ENCODE measurements at regions of chr17 and their contacts with region 1.

Region 1: DNA sequence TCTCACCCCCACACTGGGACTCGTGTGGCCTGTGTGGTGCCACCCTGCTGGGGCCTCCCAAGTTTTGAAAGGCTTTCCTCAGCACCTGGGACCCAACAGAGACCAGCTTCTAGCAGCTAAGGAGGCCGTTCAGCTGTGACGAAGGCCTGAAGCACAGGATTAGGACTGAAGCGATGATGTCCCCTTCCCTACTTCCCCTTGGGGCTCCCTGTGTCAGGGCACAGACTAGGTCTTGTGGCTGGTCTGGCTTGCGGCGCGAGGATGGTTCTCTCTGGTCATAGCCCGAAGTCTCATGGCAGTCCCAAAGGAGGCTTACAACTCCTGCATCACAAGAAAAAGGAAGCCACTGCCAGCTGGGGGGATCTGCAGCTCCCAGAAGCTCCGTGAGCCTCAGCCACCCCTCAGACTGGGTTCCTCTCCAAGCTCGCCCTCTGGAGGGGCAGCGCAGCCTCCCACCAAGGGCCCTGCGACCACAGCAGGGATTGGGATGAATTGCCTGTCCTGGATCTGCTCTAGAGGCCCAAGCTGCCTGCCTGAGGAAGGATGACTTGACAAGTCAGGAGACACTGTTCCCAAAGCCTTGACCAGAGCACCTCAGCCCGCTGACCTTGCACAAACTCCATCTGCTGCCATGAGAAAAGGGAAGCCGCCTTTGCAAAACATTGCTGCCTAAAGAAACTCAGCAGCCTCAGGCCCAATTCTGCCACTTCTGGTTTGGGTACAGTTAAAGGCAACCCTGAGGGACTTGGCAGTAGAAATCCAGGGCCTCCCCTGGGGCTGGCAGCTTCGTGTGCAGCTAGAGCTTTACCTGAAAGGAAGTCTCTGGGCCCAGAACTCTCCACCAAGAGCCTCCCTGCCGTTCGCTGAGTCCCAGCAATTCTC is 27.4 kb downstream of the STH start:
- DNase-seq: no peak
- H3K4me3 ChIP-seq: no peak overlapping the region
- H3K27ac ChIP-seq: no peak overlapping the region
- H3K4me1 ChIP-seq: no peaks in the 10 kb centered on the region
- H3K27me3 ChIP-seq: no peaks in the 10 kb centered on the region
- CTCF ChIP-seq: no peak
- EP300 ChIP-seq: no peak
- POLR2A ChIP-seq: no peak

Region 2: GRCh38 chr17:45852535-45853297 is 173.7 kb before region 1 on chr17:
- intact Hi-C with region 1: no loop called
- DNase-seq: peak; percentile 37 to 71 (median 56)
- H3K4me3 ChIP-seq: no peak overlapping the region
- H3K27ac ChIP-seq: no peak overlapping the region
- H3K4me1 ChIP-seq: no peaks in the 10 kb centered on the region
- H3K27me3 ChIP-seq: no peaks in the 10 kb centered on the region
- CTCF ChIP-seq: peak; percentile 44 to 68 (median 61)
- EP300 ChIP-seq: no peak
- POLR2A ChIP-seq: no peak

Region 3: DNA sequence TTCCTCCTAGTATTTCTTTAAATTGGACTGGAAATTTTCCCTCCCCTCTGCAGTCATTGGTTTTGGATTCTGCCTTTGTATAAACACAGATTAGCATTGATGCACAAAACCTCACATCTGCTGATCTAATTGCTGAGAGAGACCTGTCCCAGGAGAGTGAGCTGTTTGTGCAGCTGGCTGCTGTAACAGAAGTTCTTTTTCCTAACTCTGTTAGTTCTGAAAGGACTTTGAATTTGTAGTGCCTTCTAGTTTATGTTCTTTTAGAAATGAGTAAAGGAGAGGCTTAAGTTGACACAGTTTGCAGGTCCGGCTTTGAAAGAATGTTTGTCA is 1578.2 kb after region 1 on chr17:
- intact Hi-C with region 1: loop called in 1 of 4 experiments (anchors 5 kb)
- DNase-seq: no peak
- H3K4me3 ChIP-seq: no peak overlapping the region
- H3K27ac ChIP-seq: no peak overlapping the region
- H3K4me1 ChIP-seq: peaks cover 2% of the 10 kb centered on the region
- H3K27me3 ChIP-seq: no peaks in the 10 kb centered on the region
- CTCF ChIP-seq: no peak
- EP300 ChIP-seq: no peak
- POLR2A ChIP-seq: no peak